HEK293T (cell line): ENCODE measurements at regions of chr2 and their contacts with region 1.

Region 1: DNA sequence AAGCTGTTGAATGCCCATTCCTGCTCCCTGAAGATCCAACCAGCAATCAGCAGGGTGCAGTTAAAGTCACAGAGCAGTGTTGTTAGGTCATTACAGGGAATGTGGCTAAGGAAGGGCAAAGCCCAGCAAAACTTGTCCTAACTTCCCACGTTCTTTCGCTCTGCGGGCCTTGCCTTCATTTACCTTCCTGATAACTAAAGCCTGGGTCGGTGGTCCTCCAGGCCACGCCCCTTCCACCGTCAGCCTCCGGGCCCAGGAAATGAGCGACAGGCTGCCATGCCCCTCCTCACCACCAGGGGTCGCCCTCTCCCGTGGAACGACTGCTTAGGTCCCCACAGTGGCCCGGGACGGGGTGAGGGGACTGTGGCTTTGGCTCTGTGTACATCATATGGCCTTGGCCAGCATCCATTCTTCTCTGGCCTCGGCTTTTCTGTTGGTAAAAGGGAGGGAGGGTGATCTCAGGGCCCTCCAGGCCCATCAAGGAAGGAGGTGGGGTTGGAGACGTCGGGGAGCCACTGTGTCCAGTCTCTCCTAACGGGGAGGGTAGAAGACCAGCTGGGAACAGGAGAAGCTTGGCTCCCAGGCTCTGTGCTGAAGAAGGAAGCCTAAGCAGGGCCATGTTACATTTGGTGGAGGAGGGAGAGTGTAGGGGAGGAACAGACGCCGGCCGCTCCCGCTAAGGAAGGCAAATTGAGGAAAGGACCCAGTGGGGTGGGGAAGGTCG is 2.2 kb downstream of the SH2D6 start:
- DNase-seq: peak; percentile 88

Region 2: GRCh38 chr2:84999553-84999955 is 421.1 kb before region 1 on chr2:
- CTCF ChIA-PET with region 1: no interaction called
- POLR2A ChIA-PET with region 1: no interaction called
- DNase-seq: no peak

Region 3: GRCh38 chr2:85354286-85355072 is 66.2 kb before region 1 on chr2 and contains the starts of genes ELMOD3 and RETSAT:
- CTCF ChIA-PET with region 1: no interaction called
- POLR2A ChIA-PET with region 1: interaction called, 12 read pairs
- DNase-seq: peak; percentile 97

Region 4: DNA sequence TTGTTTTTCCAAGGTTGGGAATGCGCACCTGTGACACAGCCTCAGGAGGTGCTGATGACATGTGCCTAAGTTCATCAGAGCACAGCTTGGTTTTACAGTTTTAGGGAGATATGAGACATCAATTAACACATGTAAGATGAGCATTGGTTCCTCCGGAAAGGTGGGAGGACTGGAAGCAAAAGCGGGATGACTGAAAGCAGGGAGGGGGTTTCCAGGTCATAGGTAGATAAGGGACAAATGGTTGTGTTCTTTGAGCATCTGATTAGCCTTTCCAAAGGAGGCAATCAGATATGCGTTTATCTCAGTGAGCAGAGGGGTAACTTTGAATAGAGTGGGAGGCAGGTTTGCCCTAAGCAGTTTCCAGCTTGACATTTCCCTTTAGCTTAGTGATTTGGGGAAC is 36.8 kb before region 1 on chr2:
- CTCF ChIA-PET with region 1: no interaction called
- POLR2A ChIA-PET with region 1: no interaction called
- DNase-seq: no peak

Region 5: GRCh38 chr2:85437488-85438284 is 17.0 kb after region 1 on chr2:
- CTCF ChIA-PET with region 1: no interaction called
- POLR2A ChIA-PET with region 1: interaction called, 23 read pairs
- DNase-seq: peak; percentile 62

Region 6: GRCh38 chr2:85524336-85524933 is 103.7 kb after region 1 on chr2:
- CTCF ChIA-PET with region 1: no interaction called
- POLR2A ChIA-PET with region 1: interaction called, 14 read pairs
- DNase-seq: peak; percentile 48

Region 7: GRCh38 chr2:85551698-85552678 is 131.3 kb after region 1 on chr2:
- CTCF ChIA-PET with region 1: interaction called, 68 read pairs
- POLR2A ChIA-PET with region 1: interaction called, 76 read pairs
- DNase-seq: peak; percentile 71

Region 8: DNA sequence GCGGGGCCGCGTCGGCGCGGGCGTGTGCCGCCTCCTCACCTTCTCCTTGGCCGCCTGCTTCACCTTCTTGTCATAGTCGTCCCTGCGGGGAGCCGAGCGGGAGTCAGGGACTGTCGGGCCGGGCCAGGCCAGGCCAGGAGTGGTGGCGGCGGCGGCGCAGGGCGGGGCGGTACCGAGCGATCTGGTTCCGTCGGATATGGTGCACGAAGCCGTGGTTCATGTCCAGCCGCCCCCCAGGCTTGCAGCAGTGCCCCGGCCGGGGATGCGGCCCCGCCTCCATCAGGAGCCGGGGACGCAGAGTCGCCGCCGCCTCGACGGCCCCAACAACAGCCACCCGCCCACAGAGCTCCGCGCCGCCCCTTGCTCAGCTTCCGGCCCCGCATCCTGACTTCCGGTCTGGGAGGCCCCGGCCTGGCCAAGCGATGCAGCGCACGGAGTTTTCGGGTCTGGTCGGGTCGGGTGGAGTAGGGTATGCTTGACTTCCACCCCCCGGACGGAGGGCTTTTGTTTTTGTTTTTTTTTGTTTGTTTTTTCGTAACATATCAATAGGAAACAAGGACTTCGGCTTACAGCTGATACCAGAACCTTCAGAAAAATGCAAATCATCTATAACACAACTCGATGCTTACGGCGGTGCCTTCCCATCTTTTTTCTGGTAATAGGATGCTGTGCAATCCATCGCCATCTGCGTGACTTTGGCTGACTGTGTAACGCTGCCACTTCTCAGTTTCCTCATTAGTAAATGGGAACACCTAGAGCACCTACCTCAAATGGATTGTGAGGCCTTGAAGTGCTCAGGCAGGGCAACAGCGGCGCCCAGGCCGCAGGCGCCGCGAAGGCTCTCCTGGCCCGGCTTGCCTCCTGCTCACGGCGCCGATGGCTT is 191.2 kb after region 1 on chr2 and contains the start of gene C2orf68:
- CTCF ChIA-PET with region 1: no interaction called
- POLR2A ChIA-PET with region 1: interaction called, 11 read pairs
- DNase-seq: peak; percentile 91

Region 9: DNA sequence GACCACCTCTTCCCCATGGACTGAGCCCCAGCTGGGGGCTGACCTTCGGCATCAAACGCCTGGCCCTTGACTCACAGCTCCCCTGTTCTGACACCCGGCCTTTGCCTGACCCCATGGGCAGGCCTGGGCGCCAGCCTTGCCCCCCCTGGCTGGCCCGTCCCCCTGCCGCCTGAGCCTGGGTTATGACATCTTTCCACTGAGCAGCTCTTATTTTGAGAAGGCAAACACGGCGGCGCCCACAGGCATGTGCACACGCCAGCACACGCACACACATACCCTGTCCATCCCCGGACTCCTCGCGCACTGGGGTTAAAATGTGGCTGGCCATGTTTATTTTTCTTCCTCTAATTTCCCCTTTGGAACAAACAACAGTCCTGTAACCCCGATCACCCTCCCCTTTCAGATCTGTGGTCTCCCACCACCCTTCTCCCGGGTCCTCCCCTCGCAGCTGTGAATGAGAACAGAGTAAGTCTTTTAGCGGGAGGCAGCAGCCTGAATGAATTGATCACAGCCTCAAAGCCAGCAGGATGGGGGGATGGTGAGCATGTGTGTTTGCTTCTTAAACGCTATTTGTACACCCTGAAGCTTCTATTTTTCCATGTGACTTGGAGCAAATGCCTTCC is 321.2 kb after region 1 on chr2:
- CTCF ChIA-PET with region 1: no interaction called
- POLR2A ChIA-PET with region 1: no interaction called
- DNase-seq: no peak